Kidney (tissue), 22 donors: ENCODE measurements at regions of chr12 and their contacts with region 1.

Region 1: DNA sequence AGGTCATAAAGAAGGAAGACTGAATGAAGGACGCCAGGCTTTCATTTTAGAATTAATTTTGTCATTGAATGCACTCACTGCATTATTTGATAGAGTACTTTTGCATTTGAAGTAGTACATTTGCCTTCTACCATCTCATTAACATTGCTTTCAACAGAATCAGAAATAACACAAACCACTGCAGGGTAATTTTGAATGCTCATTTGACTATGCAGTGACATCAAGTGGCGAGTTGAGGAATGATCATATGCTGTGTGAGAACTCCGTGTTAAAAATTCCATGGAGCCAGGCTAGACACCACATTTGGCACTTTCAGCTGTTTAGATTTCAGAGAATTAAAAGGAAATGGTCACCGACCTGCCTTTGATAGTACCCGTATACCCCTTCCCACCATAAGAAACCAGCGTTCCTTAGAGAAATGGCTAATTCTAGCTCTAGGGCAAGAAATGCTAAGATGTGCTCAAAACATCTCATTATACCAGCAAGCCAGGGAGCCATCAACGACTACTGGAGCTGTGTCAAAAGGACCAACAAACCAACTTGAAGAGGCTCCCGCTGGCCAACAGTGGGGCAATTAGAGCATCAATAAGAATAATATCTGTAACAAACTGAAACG is 16.5 kb downstream of the HEBP1 start:
- DNase-seq: peak in 2 of 5 donors; percentile 64 to 69
- H3K4me3 ChIP-seq: no peak overlapping the region
- H3K27ac ChIP-seq: no peak overlapping the region
- H3K4me1 ChIP-seq: no peaks in the 10 kb centered on the region
- H3K27me3 ChIP-seq: no peaks in the 10 kb centered on the region
- CTCF ChIP-seq: peak; percentile 61

Region 2: DNA sequence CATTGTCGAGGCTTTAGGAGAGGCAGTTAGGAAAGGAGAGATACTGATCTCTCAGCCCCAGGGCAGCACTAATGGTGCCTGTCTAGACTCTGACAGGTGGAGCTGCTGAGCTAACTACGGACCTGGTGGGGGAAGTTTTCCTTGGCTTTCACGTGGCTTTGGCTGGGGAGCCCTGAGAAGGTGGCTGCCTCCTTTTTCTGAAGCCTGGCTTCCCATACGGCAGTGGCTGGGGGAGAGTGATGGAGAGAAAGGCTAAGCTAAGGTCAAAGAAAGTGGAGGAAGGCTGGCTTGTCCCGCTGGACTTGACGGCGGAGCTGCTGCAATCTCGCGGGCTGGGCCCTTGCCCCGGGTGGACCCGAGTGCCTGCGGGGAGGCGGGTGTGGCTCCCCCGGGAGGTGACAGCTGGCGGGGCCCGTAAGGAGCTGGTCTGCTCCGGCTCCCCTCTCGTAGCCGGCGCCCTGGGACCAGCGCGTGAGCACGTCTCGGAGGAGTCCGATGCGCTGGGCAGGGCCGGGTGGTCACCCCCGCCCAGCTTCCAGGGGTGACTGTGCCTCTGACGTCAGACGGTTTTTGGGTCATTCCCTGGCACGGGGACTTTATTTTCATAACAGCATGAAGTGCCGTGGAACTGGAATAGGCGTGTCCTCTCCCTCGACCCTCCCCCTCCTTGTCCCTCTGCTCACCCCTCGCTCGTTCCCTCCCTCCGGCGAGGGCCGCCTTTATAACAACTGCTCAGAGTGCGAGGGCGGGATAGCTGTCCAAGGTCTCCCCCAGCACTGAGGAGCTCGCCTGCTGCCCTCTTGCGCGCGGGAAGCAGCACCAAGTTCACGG is 92.5 kb before region 1 on chr12 and contains the start of gene GPRC5A:
- intact Hi-C with region 1: no loop called
- DNase-seq: peak; percentile 85 to 96 (median 93)
- H3K4me3 ChIP-seq: peak within 1 kb of the TSS; percentile 44 to 68 (median 63)
- H3K27ac ChIP-seq: peak within 1 kb of the TSS; percentile 58 to 70
- H3K4me1 ChIP-seq: peaks cover 0 to 6% (median 0%) of the 10 kb centered on the region in 3 donors
- H3K27me3 ChIP-seq: no peaks in the 10 kb centered on the region
- CTCF ChIP-seq: peak; percentile 19
- total RNA-seq, gene GPRC5A: 60.6 TPM

Region 3: GRCh38 chr12:12916135-12916944 is 67.2 kb before region 1 on chr12:
- intact Hi-C with region 1: loop called (anchors 10 kb)
- DNase-seq: peak; percentile 89 to 93 (median 92)
- H3K4me3 ChIP-seq: peak overlapping the region in 1 of 3 donors; percentile 10
- H3K27ac ChIP-seq: peak overlapping the region in 1 of 2 donors; percentile 15
- H3K4me1 ChIP-seq: peaks cover 0 to 8% (median 0%) of the 10 kb centered on the region in 3 donors
- H3K27me3 ChIP-seq: no peaks in the 10 kb centered on the region
- CTCF ChIP-seq: peak; percentile 99